Right ventricle myocardium inferior (tissue), 1 donor: ENCODE measurements at regions of chr17 and their contacts with region 1.

Region 1: DNA sequence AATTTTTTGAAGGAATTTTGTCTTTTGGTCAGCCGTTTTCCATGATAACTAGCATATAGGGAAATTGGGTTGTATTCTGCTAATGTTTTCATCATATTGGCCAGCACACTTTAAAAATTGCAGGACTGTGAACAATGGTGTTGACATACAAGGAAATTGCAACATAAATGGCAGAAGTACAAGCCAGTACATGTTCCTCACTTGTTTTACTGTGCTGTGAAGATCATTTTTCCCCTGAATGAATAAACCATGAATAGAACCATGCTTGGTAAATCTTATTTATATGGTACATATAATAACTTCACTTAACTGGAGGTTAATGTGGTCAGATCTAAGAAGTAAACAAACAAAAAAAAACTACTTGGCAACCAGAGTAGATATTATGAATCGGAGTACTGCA is 22.8 kb downstream of the OMG start:
- DNase-seq: no peak
- ATAC-seq: peak; percentile 86

Region 2: GRCh38 chr17:31211352-31212012 is 62.8 kb before region 1 on chr17:
- intact Hi-C with region 1: no loop called
- DNase-seq: no peak
- ATAC-seq: no peak

Region 3: GRCh38 chr17:31226373-31226772 is 47.9 kb before region 1 on chr17:
- intact Hi-C with region 1: no loop called
- DNase-seq: no peak
- ATAC-seq: no peak

Region 4: DNA sequence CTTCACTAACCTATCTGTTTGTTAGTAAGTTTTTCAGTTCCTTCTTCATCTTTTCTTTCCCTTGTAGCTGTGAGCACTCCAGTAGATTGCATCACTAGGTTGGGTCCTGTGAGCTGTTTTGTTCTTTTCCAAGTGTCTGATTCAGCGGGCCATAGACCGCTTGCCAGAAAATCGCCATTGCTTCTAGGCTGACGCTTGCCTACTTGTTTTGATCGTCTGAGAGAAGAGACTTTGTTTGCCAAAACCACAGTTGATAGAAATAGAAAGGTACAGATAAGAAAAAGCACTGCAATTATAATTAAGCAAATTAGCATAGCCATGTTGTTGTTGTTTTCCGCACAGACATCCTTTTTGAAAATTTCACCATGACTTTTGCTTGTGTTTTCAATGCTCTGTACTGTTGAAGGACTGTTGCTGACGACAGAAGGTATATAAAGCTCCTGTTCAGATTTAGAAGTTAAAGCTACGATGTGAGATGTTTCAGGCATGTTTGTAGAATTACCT is 44.1 kb after region 1 on chr17:
- intact Hi-C with region 1: loop called (anchors 5 kb)
- DNase-seq: peak; percentile 68
- ATAC-seq: peak; percentile 88